B cell (primary cell): ENCODE measurements at regions of chr20 and their contacts with region 1.

Region 1: DNA sequence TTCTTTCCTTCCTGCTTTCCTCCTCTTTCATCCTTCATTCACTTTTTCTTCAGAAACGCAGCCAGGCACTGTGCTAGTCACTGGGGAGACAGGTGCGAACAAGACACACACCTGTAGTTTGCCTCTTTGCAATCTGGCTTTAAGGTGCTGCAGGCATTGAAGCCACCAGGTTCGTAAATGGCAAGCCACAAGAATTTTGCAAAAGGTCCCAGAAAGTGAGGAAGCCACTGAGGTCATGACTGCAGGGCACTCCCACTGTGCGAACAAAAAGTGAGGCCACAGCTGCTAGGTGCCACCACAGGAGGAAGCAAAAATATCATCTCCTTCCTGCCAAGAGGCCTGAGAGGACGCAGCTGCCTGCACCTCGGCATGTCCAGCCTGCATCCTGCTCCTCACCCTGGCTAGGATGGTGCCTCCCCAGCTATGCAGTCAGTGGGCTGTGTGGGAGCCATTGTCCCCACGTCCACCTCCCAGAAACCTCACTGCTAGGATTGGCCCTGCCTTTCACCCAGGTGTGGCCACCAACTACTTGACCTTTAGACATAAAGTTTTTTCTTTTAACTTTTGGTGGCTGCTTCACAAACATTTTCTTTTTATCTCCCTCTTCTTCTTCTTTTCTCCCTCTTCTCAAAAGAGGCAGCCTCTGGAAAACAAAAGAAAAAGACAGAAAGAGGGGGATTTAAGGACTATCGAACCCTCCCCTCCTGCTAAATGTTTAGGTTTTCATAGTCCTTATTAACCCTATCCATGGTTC is 230.8 kb downstream of the BCAS1 start:
- DNase-seq: peak; percentile 79
- ATAC-seq: peak; percentile 81
- H3K4me3 ChIP-seq: peak overlapping the region in 2 of 5 experiments; percentile 1 to 30
- H3K4me3 Mint-ChIP-seq: peak overlapping the region; percentile 86
- H3K27ac ChIP-seq: peak overlapping the region; percentile 69 to 78
- H3K27ac Mint-ChIP-seq: peak overlapping the region; percentile 96
- H3K4me1 ChIP-seq: peaks cover 62 to 71% of the 10 kb centered on the region in 2 donors
- H3K4me1 Mint-ChIP-seq: peaks cover 73% of the 10 kb centered on the region
- H3K27me3 ChIP-seq: no peaks in the 10 kb centered on the region
- H3K27me3 Mint-ChIP-seq: no peaks in the 10 kb centered on the region
- CTCF ChIP-seq: no peak

Region 2: GRCh38 chr20:53643031-53643832 is 196.4 kb before region 1 on chr20:
- CTCF ChIA-PET with region 1: no interaction called
- POLR2A ChIA-PET with region 1: no interaction called
- intact Hi-C with region 1: loop called (anchors 5 kb)
- DNase-seq: peak; percentile 74
- ATAC-seq: peak; percentile 90
- H3K4me3 ChIP-seq: peak overlapping the region in 4 of 5 experiments; percentile 0 to 43 (median 24)
- H3K4me3 Mint-ChIP-seq: peak overlapping the region; percentile 82
- H3K27ac ChIP-seq: peak overlapping the region; percentile 64 to 85
- H3K27ac Mint-ChIP-seq: peak overlapping the region; percentile 95
- H3K4me1 ChIP-seq: peaks cover 23 to 26% of the 10 kb centered on the region in 2 donors
- H3K4me1 Mint-ChIP-seq: peaks cover 31% of the 10 kb centered on the region
- H3K27me3 ChIP-seq: no peaks in the 10 kb centered on the region
- H3K27me3 Mint-ChIP-seq: no peaks in the 10 kb centered on the region
- CTCF ChIP-seq: no peak

Region 3: GRCh38 chr20:53738039-53738944 is 101.3 kb before region 1 on chr20:
- CTCF ChIA-PET with region 1: interaction called, 3 read pairs
- POLR2A ChIA-PET with region 1: no interaction called
- intact Hi-C with region 1: loop called (anchors 5 kb)
- DNase-seq: peak; percentile 41
- ATAC-seq: no peak
- H3K4me3 ChIP-seq: no peak overlapping the region
- H3K4me3 Mint-ChIP-seq: peak overlapping the region; percentile 10
- H3K27ac ChIP-seq: peak overlapping the region; percentile 77 to 79
- H3K27ac Mint-ChIP-seq: peak overlapping the region; percentile 83
- H3K4me1 ChIP-seq: peaks cover 64 to 65% of the 10 kb centered on the region in 2 donors
- H3K4me1 Mint-ChIP-seq: peaks cover 71% of the 10 kb centered on the region
- H3K27me3 ChIP-seq: no peaks in the 10 kb centered on the region
- H3K27me3 Mint-ChIP-seq: no peaks in the 10 kb centered on the region
- CTCF ChIP-seq: no peak

Region 4: DNA sequence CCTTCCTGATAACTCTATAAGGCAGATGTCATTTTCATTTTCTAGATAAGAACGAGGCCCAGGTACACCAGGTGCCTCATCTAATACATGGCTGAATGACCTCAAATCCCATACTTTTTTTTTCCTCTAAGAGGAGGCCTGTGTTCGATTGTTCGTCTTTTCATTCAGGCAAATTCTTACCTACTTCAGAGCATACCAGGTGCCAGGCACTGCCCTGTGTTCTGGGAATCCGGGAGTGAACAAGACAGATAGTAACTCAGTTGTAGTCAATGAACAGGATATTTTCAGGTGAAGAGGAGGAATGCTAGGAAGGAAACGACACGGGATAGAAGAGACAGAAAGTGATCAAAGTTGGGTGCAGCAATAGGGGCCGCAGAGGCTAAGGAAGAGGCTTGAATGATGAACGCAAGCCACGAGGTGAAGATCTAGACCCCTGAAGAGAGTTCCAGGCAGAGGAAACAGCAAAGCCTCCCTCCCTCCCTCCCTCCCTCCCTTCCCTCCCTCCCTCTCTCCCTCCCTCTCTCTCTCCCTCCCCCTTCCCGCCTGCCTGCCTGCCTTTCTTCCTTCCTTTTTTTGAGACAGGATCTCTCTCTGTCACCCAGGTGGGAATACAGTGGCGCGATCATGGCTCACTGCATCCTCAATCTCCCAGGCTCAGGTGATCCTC is 95.9 kb before region 1 on chr20:
- CTCF ChIA-PET with region 1: no interaction called
- POLR2A ChIA-PET with region 1: interaction called, 11 read pairs
- intact Hi-C with region 1: loop called (anchors 5 kb)
- DNase-seq: no peak
- ATAC-seq: no peak
- H3K4me3 ChIP-seq: no peak overlapping the region
- H3K4me3 Mint-ChIP-seq: no peak overlapping the region
- H3K27ac ChIP-seq: no peak overlapping the region
- H3K27ac Mint-ChIP-seq: peak overlapping the region; percentile 27
- H3K4me1 ChIP-seq: peaks cover 37% of the 10 kb centered on the region in 2 donors
- H3K4me1 Mint-ChIP-seq: peaks cover 40% of the 10 kb centered on the region
- H3K27me3 ChIP-seq: no peaks in the 10 kb centered on the region
- H3K27me3 Mint-ChIP-seq: no peaks in the 10 kb centered on the region
- CTCF ChIP-seq: no peak

Region 5: GRCh38 chr20:53828682-53829254 is 10.8 kb before region 1 on chr20:
- CTCF ChIA-PET with region 1: interaction called, 7 read pairs
- POLR2A ChIA-PET with region 1: interaction called, 3 read pairs
- intact Hi-C with region 1: loop called (anchors 2 kb)
- DNase-seq: peak; percentile 27
- ATAC-seq: no peak
- H3K4me3 ChIP-seq: peak overlapping the region; percentile 15 to 50 (median 24)
- H3K4me3 Mint-ChIP-seq: peak overlapping the region; percentile 88
- H3K27ac ChIP-seq: peak overlapping the region; percentile 83 to 93
- H3K27ac Mint-ChIP-seq: peak overlapping the region; percentile 98
- H3K4me1 ChIP-seq: peaks cover 53 to 61% of the 10 kb centered on the region in 2 donors
- H3K4me1 Mint-ChIP-seq: peaks cover 70% of the 10 kb centered on the region
- H3K27me3 ChIP-seq: no peaks in the 10 kb centered on the region
- H3K27me3 Mint-ChIP-seq: no peaks in the 10 kb centered on the region
- CTCF ChIP-seq: no peak